AG04449 (cell line): ENCODE measurements at regions of chr16 and their contacts with region 1.

Region 1: GRCh38 chr16:4253394-4254150 is 11.7 kb upstream of the SRL start:
- DNase-seq: peak; percentile 93
- H3K4me3 ChIP-seq: peak overlapping the region; percentile 66
- CTCF ChIP-seq: no peak

Region 2: GRCh38 chr16:3983081-3983520 is 270.5 kb before region 1 on chr16:
- CTCF ChIA-PET with region 1: interaction called, 67 read pairs
- POLR2A ChIA-PET with region 1: interaction called, 4 read pairs
- DNase-seq: no peak
- H3K4me3 ChIP-seq: no peak overlapping the region
- CTCF ChIP-seq: peak; percentile 89

Region 3: GRCh38 chr16:4115209-4115963 is 138.2 kb before region 1 on chr16:
- CTCF ChIA-PET with region 1: interaction called, 30 read pairs
- POLR2A ChIA-PET with region 1: interaction called, 7 read pairs
- DNase-seq: no peak
- H3K4me3 ChIP-seq: peak overlapping the region; percentile 64
- CTCF ChIP-seq: no peak

Region 4: GRCh38 chr16:4214215-4214621 is 39.4 kb before region 1 on chr16:
- CTCF ChIA-PET with region 1: interaction called, 22 read pairs
- POLR2A ChIA-PET with region 1: no interaction called
- DNase-seq: peak; percentile 72
- H3K4me3 ChIP-seq: no peak overlapping the region
- CTCF ChIP-seq: no peak

Region 5: GRCh38 chr16:4239020-4239419 is 14.6 kb before region 1 on chr16:
- CTCF ChIA-PET with region 1: interaction called, 39 read pairs
- POLR2A ChIA-PET with region 1: interaction called, 9 read pairs
- DNase-seq: no peak
- H3K4me3 ChIP-seq: no peak overlapping the region
- CTCF ChIP-seq: no peak

Region 6: DNA sequence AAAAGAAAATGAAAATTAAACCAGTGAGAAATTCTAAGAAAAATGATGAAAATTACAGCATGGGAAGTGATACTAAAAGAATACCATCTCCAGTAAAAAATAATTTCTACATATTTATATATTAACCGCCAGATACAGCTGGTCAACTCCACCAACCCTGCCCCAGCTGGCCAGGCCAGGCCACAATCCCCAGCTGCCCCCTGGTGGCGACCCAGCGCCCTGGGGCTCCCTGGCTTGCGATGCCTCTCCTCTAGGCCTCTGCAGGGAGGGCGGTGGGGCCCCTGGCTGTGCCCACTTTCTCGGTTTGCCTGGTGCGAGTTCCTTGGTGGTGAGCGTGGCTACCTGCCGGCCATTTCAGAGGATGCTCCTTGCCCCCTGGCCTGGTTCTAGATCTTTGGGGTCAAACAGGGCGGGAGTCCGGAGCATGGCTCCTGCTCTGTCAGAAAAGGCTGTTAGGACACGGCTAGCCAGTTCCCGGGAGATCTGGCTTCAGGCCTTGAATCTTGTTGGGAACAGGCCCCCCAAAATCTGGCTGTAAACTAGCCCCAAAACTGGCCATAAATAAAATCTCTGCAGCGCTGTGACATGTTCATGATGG is 76.8 kb after region 1 on chr16:
- CTCF ChIA-PET with region 1: interaction called, 43 read pairs
- POLR2A ChIA-PET with region 1: no interaction called
- DNase-seq: no peak
- H3K4me3 ChIP-seq: no peak overlapping the region
- CTCF ChIP-seq: peak; percentile 96

Region 7: GRCh38 chr16:4869147-4869805 is 615.7 kb after region 1 on chr16:
- CTCF ChIA-PET with region 1: no interaction called
- POLR2A ChIA-PET with region 1: no interaction called
- DNase-seq: no peak
- H3K4me3 ChIP-seq: no peak overlapping the region
- CTCF ChIP-seq: no peak